OCI-LY7 (cell line): ENCODE measurements at regions of chr3 and their contacts with region 1.

Region 1: GRCh38 chr3:100400780-100401673 is at the starts of genes LNP1 and TOMM70:
- DNase-seq: peak; percentile 97
- H3K4me3 ChIP-seq: peak within 1 kb of the TSS; percentile 93
- H3K27ac ChIP-seq: peak within 1 kb of the TSS; percentile 81
- H3K4me1 ChIP-seq: peaks cover 27% of the 10 kb centered on the region
- CTCF ChIP-seq: no peak
- total RNA-seq, gene LNP1: 8.8 and 8.9 TPM in 2 replicates
- total RNA-seq, gene TOMM70: 41.2 and 45.7 TPM in 2 replicates

Region 2: GRCh38 chr3:100260685-100261484 is 140.1 kb before region 1 on chr3 and contains the start of gene TBC1D23:
- CTCF ChIA-PET with region 1: no interaction called
- POLR2A ChIA-PET with region 1: interaction called, 5 read pairs
- intact Hi-C with region 1: loop called (anchors 1 kb)
- DNase-seq: peak; percentile 99
- H3K4me3 ChIP-seq: peak within 1 kb of the TSS; percentile 91
- H3K27ac ChIP-seq: peak within 1 kb of the TSS; percentile 18
- H3K4me1 ChIP-seq: peaks cover 14% of the 10 kb centered on the region
- CTCF ChIP-seq: no peak; the same call in 1 of the 2 replicates
- total RNA-seq, gene TBC1D23: 12.0 and 12.7 TPM in 2 replicates

Region 3: GRCh38 chr3:100386437-100387074 is 14.5 kb before region 1 on chr3:
- CTCF ChIA-PET with region 1: no interaction called
- POLR2A ChIA-PET with region 1: interaction called, 12 read pairs
- intact Hi-C with region 1: loop called (anchors 1 kb)
- DNase-seq: no peak
- H3K4me3 ChIP-seq: no peak overlapping the region
- H3K27ac ChIP-seq: no peak overlapping the region
- H3K4me1 ChIP-seq: no peaks in the 10 kb centered on the region
- CTCF ChIP-seq: no peak

Region 4: DNA sequence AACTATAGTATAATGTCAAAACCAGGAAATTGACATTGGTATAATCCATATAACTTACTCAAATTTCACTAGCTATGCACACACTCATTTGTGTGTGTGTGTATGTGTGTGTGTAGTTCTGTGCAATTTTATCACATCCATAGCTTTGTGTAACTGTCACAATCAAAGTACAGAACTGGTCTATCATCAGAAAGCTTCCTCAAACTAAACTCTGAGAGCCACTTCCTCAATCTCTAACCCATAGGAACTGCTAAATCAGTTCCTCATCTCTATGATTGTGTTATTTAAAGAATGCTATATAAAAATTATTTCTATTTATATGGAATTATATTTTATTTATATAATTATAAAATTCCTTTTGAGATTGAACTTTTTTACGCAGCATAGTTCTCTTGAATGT is 18.4 kb after region 1 on chr3:
- CTCF ChIA-PET with region 1: no interaction called
- POLR2A ChIA-PET with region 1: interaction called, 13 read pairs
- intact Hi-C with region 1: no loop called
- DNase-seq: peak; percentile 18
- H3K4me3 ChIP-seq: no peak overlapping the region
- H3K27ac ChIP-seq: no peak overlapping the region
- H3K4me1 ChIP-seq: peaks cover 6% of the 10 kb centered on the region
- CTCF ChIP-seq: no peak

Region 5: GRCh38 chr3:100463002-100463401 is 62.0 kb after region 1 on chr3:
- CTCF ChIA-PET with region 1: no interaction called
- POLR2A ChIA-PET with region 1: no interaction called
- intact Hi-C with region 1: no loop called
- DNase-seq: peak; percentile 49
- H3K4me3 ChIP-seq: no peak overlapping the region
- H3K27ac ChIP-seq: no peak overlapping the region
- H3K4me1 ChIP-seq: no peaks in the 10 kb centered on the region
- CTCF ChIP-seq: peak; percentile 80

Region 6: DNA sequence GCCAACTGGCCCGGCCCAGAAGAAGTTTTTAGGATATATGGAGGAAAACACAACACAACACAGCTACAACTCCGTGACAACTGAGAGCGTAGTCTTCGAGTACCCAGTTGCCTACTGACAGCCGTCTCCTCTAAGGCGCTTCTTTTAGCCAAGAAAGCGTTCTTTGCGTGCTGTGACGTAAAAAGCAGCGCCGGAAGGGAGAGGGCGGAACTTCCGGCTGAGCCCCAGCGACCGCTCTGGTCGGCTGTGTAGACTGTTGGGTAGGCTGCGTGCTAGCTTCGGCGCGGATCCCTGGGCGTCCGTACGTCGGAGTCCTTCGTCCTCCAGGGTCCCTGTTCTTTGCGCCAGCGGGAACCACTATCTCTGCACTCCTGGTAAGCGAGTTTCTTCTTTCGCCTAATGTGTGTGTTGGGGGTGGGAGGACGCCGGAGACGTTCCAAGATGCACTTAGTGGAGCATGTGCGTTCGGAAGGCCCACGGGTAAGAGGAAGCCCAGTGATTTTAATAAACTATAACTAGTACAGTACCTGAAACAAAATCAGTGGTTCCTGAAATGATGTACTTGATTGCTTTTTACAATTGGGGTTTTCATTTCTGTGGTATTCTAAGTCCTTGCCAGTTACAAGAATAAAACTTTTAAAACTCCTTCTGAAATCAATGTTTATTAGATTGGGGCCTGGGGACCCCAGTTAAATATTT is 1160.8 kb after region 1 on chr3 and contains the start of gene TRMT10C:
- CTCF ChIA-PET with region 1: no interaction called
- POLR2A ChIA-PET with region 1: no interaction called
- intact Hi-C with region 1: loop called (anchors 10 kb)
- DNase-seq: peak; percentile 95
- H3K4me3 ChIP-seq: peak within 1 kb of the TSS; percentile 97
- H3K27ac ChIP-seq: peak within 1 kb of the TSS; percentile 56
- H3K4me1 ChIP-seq: peaks cover 24% of the 10 kb centered on the region
- CTCF ChIP-seq: no peak
- total RNA-seq, gene TRMT10C: 23.6 and 26.5 TPM in 2 replicates